PC-9 (cell line): ENCODE measurements at regions of chr6 and their contacts with region 1.

Region 1: GRCh38 chr6:133341607-133342158 is 100.5 kb downstream of the EYA4 start:
- DNase-seq: peak; percentile 37 to 79
- H3K4me3 ChIP-seq: no peak overlapping the region
- H3K27ac ChIP-seq: peak overlapping the region; percentile 56
- H3K4me1 ChIP-seq: peaks cover 22% of the 10 kb centered on the region
- H3K27me3 ChIP-seq: no peaks in the 10 kb centered on the region
- CTCF ChIP-seq: no peak

Region 2: DNA sequence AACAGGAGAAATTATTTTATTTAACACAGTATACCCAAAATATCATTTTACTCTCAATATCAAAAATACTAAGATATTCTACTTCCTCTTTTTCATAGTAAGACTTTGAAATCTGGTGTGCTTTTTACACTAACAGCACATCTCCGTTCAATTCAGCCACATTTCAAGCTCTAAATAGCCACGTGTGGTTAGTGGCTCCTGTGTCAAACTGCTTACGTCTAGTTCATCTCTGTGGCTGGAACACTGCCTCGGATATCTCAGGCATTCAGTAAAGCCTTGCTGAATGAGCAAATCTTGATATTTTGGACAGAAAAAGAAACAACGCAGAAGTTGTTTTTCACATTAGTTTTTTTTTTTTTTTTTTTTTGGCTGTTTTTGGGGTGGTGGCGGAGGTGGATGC is 35.5 kb after region 1 on chr6:
- CTCF ChIA-PET with region 1: no interaction called
- POLR2A ChIA-PET with region 1: no interaction called
- intact Hi-C with region 1: no loop called
- DNase-seq: no peak
- H3K4me3 ChIP-seq: no peak overlapping the region
- H3K27ac ChIP-seq: no peak overlapping the region
- H3K4me1 ChIP-seq: no peaks in the 10 kb centered on the region
- H3K27me3 ChIP-seq: no peaks in the 10 kb centered on the region
- CTCF ChIP-seq: no peak

Region 3: DNA sequence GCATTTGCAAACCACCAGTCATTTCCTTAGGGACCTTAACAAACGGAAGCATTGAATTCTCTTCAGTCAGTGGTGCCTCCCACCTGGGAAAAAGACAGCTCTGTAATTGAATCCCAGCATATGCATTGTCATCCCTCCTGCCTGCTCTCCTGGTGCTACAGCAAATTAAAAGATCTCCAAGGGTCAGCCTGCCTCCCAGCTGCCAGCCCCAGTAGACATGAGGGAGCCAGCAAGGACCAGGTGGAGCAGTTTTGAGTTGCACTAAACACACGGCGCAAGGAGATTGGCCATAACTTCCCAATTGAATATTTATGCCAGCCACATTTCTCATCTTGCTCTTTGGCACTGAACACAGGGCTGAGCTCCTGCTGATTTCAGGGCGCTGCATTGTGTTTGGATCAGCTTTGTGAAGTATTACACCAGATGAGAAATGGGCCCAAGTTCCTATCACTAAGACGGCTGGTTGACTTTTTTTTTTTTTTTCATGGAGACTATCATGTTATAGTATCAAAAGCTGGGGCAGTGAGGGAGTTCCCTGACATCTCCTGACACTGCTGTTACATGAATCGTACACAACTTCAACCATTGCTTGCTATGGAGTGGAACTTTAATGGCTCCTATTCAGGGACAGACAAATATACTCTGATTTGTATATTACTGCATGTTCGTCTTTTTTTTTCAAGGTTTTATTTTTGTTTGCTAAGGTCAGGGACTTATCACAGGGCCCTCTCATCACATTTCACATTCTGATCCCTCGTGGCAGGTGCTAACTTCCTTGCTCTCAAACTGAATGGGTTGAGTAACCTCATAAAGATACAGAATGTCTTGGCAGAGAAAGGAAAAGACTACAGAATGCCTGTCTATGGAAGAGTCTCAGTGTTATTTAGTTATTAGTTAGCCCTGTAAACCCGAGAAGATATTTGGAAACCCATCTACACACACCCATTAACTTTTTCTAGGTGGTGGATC is 90.6 kb after region 1 on chr6:
- CTCF ChIA-PET with region 1: interaction called, 15 read pairs
- POLR2A ChIA-PET with region 1: no interaction called
- intact Hi-C with region 1: loop called (anchors 1 kb)
- DNase-seq: no peak
- H3K4me3 ChIP-seq: no peak overlapping the region
- H3K27ac ChIP-seq: no peak overlapping the region
- H3K4me1 ChIP-seq: no peaks in the 10 kb centered on the region
- H3K27me3 ChIP-seq: no peaks in the 10 kb centered on the region
- CTCF ChIP-seq: no peak